ENCODE measurements at regions of chr2 and their contacts with region 1.

Region 1: GRCh38 chr2:120892967-120893667 is 157.4 kb downstream of the GLI2 start:
- DNase-seq: peak; percentile 80
- ATAC-seq: peak; percentile 84
- H3K4me3 ChIP-seq: peak overlapping the region; percentile 5; the same call in 1 of the 2 replicates
- H3K27ac ChIP-seq: peak overlapping the region; percentile 67
- H3K4me1 ChIP-seq: peaks cover 17% of the 10 kb centered on the region
- H3K27me3 ChIP-seq: no peaks in the 10 kb centered on the region
- CTCF ChIP-seq: no peak
- POLR2A ChIP-seq: no peak
- RAD21 ChIP-seq: 0 out of 2 replicates have a peak, but pooled peaks have one; percentile 6

Region 2: GRCh38 chr2:120360307-120360855 is 532.7 kb before region 1 on chr2:
- CTCF ChIA-PET with region 1: no interaction called
- POLR2A ChIA-PET with region 1: no interaction called
- dilution Hi-C with region 1: no loop called
- in situ Hi-C with region 1: no loop called
- intact Hi-C with region 1: no loop called
- DNase-seq: peak; percentile 55
- ATAC-seq: no peak
- H3K4me3 ChIP-seq: no peak overlapping the region
- H3K27ac ChIP-seq: no peak overlapping the region
- H3K4me1 ChIP-seq: peaks cover 1% of the 10 kb centered on the region; the same call in 1 of the 2 replicates
- H3K27me3 ChIP-seq: peaks cover 70% of the 10 kb centered on the region
- CTCF ChIP-seq: no peak
- POLR2A ChIP-seq: no peak
- RAD21 ChIP-seq: no peak

Region 3: GRCh38 chr2:120712180-120712681 is 180.9 kb before region 1 on chr2:
- CTCF ChIA-PET with region 1: no interaction called
- POLR2A ChIA-PET with region 1: interaction called, 13 read pairs
- dilution Hi-C with region 1: no loop called
- in situ Hi-C with region 1: no loop called
- intact Hi-C with region 1: no loop called
- DNase-seq: peak; percentile 35
- ATAC-seq: no peak; the same call in 1 of the 2 replicates
- H3K4me3 ChIP-seq: no peak overlapping the region
- H3K27ac ChIP-seq: no peak overlapping the region
- H3K4me1 ChIP-seq: 0 out of 2 replicates have a peak, but pooled peaks cover 2% of the 10 kb centered on the region
- H3K27me3 ChIP-seq: no peaks in the 10 kb centered on the region; the same call in 1 of the 2 replicates
- CTCF ChIP-seq: no peak
- POLR2A ChIP-seq: no peak
- RAD21 ChIP-seq: no peak

Region 4: DNA sequence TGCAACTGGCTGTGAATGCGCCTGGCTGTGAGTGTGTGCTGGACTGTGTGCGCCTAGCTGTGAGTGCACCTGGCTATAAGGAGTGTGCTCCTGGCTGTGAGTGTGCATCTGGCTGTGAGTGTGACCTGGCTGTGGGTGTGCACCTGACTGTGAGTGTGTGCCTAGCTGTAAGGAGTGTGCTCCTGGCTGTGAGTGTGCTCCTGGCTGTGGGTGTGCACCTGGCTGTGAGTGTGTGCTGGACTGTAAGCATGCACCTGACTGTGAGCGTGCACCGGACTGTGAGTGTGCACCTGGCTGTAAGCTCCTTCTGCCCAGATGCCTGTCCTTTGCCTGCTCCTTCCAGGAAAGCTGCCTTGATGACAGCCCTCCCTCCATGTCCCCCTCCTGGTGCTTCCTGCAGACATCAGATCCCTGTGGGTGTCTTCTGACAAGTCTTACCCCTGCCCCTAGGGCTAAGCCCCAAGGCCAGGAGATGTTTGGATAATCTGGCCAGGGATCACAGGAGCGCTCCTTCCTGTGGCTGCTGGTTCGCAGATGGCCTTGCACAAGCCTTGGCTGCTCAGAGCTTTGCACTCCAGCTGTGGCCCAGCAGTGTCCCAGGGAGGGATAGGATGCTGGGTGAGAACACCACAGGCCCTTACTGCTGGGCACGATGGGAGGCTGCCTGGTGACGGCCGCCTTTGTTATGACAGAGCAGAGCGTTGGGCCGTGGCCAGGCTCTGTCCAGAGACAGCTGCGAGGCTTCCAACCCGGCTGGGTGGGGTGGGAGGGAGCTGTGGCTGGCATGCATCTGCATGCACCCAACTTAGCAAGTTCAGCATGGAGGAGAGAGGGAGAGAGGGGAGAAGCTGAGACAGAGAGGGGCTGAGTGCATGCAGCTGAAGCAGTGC is 67.5 kb before region 1 on chr2:
- CTCF ChIA-PET with region 1: no interaction called
- POLR2A ChIA-PET with region 1: no interaction called
- dilution Hi-C with region 1: no loop called
- in situ Hi-C with region 1: no loop called
- intact Hi-C with region 1: no loop called
- DNase-seq: peak; percentile 90
- ATAC-seq: peak; percentile 92
- H3K4me3 ChIP-seq: no peak overlapping the region
- H3K27ac ChIP-seq: peak overlapping the region; percentile 63
- H3K4me1 ChIP-seq: peaks cover 33% of the 10 kb centered on the region
- H3K27me3 ChIP-seq: no peaks in the 10 kb centered on the region
- CTCF ChIP-seq: no peak
- POLR2A ChIP-seq: no peak
- RAD21 ChIP-seq: no peak

Region 5: GRCh38 chr2:120912101-120912985 is 19.2 kb after region 1 on chr2:
- CTCF ChIA-PET with region 1: no interaction called
- POLR2A ChIA-PET with region 1: interaction called, 10 read pairs
- dilution Hi-C with region 1: no loop called
- in situ Hi-C with region 1: no loop called
- intact Hi-C with region 1: no loop called
- DNase-seq: peak; percentile 66
- ATAC-seq: peak; percentile 12
- H3K4me3 ChIP-seq: no peak overlapping the region
- H3K27ac ChIP-seq: peak overlapping the region; percentile 78
- H3K4me1 ChIP-seq: peaks cover 52% of the 10 kb centered on the region
- H3K27me3 ChIP-seq: no peaks in the 10 kb centered on the region
- CTCF ChIP-seq: no peak
- POLR2A ChIP-seq: no peak
- RAD21 ChIP-seq: no peak

Region 6: GRCh38 chr2:121147766-121148165 is 254.6 kb after region 1 on chr2:
- CTCF ChIA-PET with region 1: no interaction called
- POLR2A ChIA-PET with region 1: no interaction called
- dilution Hi-C with region 1: no loop called
- in situ Hi-C with region 1: no loop called
- intact Hi-C with region 1: no loop called
- DNase-seq: no peak
- ATAC-seq: no peak
- H3K4me3 ChIP-seq: no peak overlapping the region
- H3K27ac ChIP-seq: no peak overlapping the region
- H3K4me1 ChIP-seq: no peaks in the 10 kb centered on the region
- H3K27me3 ChIP-seq: peaks cover 18% of the 10 kb centered on the region
- CTCF ChIP-seq: no peak
- POLR2A ChIP-seq: no peak
- RAD21 ChIP-seq: no peak

Measured in IMR-90 (cell line).